ENCODE measurements at regions of chr4 and their contacts with region 1.

Region 1: GRCh38 chr4:98658287-98659105 is at the start of gene TSPAN5:
- DNase-seq: peak; percentile 77
- H3K4me3 Mint-ChIP-seq: peak within 1 kb of the TSS; percentile 98
- H3K27ac Mint-ChIP-seq: peak within 1 kb of the TSS; percentile 71
- H3K4me1 Mint-ChIP-seq: peaks cover 74% of the 10 kb centered on the region
- H3K27me3 Mint-ChIP-seq: no peaks in the 10 kb centered on the region
- total RNA-seq, gene TSPAN5: 12.5 to 13.1 TPM

Region 2: DNA sequence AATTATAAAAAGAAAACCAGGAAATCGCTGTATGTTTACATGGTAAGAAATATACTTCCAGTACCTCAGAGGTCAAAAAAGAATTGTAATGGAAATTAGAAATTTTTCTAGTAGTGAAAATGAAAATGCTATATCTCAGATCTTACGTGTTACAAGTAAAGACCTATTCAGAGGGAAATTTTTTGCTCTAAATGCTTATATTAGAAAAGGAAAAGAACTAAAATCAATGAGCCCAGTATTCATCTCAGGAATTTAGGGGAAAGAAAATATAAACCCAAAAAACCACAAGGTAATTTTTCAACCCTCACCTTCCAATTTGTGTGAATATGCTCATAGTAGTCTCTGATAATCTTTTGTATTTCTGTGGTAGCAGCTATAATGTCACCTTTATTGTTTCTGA is 251.7 kb before region 1 on chr4:
- CTCF ChIA-PET with region 1: no interaction called
- intact Hi-C with region 1: loop called (anchors 1 kb)
- DNase-seq: no peak
- H3K4me3 Mint-ChIP-seq: no peak overlapping the region
- H3K27ac Mint-ChIP-seq: no peak overlapping the region
- H3K4me1 Mint-ChIP-seq: peaks cover 6% of the 10 kb centered on the region
- H3K27me3 Mint-ChIP-seq: no peaks in the 10 kb centered on the region

Region 3: GRCh38 chr4:98510757-98511517 is 147.6 kb before region 1 on chr4:
- CTCF ChIA-PET with region 1: no interaction called
- intact Hi-C with region 1: loop called (anchors 1 kb)
- DNase-seq: peak; percentile 73
- H3K4me3 Mint-ChIP-seq: peak overlapping the region; percentile 10
- H3K27ac Mint-ChIP-seq: peak overlapping the region; percentile 57
- H3K4me1 Mint-ChIP-seq: peaks cover 53% of the 10 kb centered on the region
- H3K27me3 Mint-ChIP-seq: no peaks in the 10 kb centered on the region

Region 4: GRCh38 chr4:98639523-98639922 is 19.0 kb before region 1 on chr4:
- CTCF ChIA-PET with region 1: no interaction called
- intact Hi-C with region 1: loop called (anchors 1 kb)
- DNase-seq: no peak
- H3K4me3 Mint-ChIP-seq: peak overlapping the region; percentile 16
- H3K27ac Mint-ChIP-seq: peak overlapping the region; percentile 33
- H3K4me1 Mint-ChIP-seq: peaks cover 46% of the 10 kb centered on the region
- H3K27me3 Mint-ChIP-seq: no peaks in the 10 kb centered on the region

Region 5: DNA sequence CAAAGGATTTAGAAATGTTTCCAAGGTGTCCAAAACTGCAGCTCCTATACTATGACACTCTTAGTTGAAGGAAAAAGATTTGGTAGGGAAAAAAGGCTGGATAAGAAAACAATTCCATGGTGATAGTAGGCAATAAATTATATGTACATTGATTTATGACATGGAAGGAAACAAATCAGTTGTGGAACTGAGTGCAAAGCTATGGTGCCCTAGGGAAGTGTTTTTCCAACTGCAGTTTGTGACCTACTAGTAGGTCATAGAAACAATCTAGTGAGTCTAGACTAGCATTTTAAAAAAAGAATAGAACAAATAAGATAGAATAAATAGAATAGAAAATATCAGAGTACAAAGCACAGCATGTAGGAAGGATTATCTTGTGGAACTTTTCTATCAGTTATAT is 58.3 kb after region 1 on chr4:
- CTCF ChIA-PET with region 1: no interaction called
- intact Hi-C with region 1: no loop called
- DNase-seq: no peak
- H3K4me3 Mint-ChIP-seq: no peak overlapping the region
- H3K27ac Mint-ChIP-seq: no peak overlapping the region
- H3K4me1 Mint-ChIP-seq: no peaks in the 10 kb centered on the region
- H3K27me3 Mint-ChIP-seq: no peaks in the 10 kb centered on the region

Region 6: GRCh38 chr4:98794565-98795205 is 136.2 kb after region 1 on chr4:
- CTCF ChIA-PET with region 1: no interaction called
- intact Hi-C with region 1: loop called (anchors 1 kb)
- DNase-seq: peak; percentile 59
- H3K4me3 Mint-ChIP-seq: no peak overlapping the region
- H3K27ac Mint-ChIP-seq: no peak overlapping the region
- H3K4me1 Mint-ChIP-seq: peaks cover 20% of the 10 kb centered on the region
- H3K27me3 Mint-ChIP-seq: no peaks in the 10 kb centered on the region

Region 7: DNA sequence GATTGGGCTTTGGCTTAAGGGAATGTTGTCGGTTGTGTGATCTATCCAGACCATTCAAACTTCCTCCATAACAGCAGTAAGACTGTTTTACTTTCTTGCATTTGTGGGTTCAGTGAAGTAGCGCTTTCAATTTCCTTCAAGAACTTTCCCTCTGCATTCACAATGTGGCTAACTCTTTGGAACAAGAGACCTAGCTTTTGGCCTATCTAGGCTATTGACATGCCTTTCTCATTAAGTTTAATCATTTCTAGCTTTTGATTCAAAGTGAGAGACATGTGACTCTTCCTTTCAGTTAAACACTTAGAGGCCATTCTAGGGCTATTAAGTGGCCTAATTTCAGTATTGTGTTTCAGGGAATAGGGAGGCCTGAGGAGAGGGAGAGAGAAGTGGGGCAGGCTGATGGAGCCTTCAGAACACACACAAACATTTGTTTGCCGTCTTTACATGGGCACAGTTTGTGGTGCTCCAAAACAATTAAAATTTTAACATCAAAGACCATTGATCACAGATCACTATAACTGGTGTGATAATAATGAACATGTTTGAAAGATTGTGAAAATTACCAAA is 396.0 kb after region 1 on chr4:
- CTCF ChIA-PET with region 1: no interaction called
- intact Hi-C with region 1: loop called (anchors 1 kb)
- DNase-seq: no peak
- H3K4me3 Mint-ChIP-seq: no peak overlapping the region
- H3K27ac Mint-ChIP-seq: peak overlapping the region; percentile 50
- H3K4me1 Mint-ChIP-seq: peaks cover 44% of the 10 kb centered on the region
- H3K27me3 Mint-ChIP-seq: no peaks in the 10 kb centered on the region

Region 8: DNA sequence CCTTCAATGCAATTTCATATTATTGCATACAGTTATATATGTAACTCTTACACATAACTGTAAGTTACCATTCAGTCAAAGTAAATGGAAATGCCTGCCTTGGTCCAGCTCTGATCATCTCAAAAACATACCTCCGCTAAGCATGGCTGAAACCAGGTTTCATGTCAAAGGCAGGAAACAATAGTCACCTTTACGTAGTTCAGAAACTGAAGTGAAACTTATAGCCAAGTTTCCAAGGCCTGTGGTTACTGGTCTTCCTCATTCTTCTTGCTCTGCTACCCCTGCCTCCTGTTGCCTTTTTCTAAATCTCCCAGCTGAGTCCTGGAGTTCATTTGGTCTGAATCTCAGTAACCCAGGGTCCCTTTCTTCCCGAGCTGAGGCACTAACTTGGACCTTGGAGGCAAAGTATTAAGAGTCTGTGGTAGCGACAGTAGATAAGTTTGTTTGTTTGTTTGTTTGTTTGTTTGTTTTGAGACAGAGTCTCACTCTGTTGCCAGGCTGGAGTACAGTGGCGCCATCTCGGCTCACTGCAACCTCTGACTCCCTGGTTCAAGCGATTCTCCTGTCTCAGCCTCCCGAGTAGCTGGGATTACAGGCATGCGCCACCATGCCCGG is 1189.0 kb after region 1 on chr4:
- CTCF ChIA-PET with region 1: no interaction called
- intact Hi-C with region 1: loop called (anchors 5 kb)
- DNase-seq: peak; percentile 61
- H3K4me3 Mint-ChIP-seq: peak overlapping the region; percentile 36
- H3K27ac Mint-ChIP-seq: peak overlapping the region; percentile 90
- H3K4me1 Mint-ChIP-seq: peaks cover 76% of the 10 kb centered on the region
- H3K27me3 Mint-ChIP-seq: no peaks in the 10 kb centered on the region